ENCODE measurements at regions of chr1 and their contacts with region 1.

Region 1: GRCh38 chr1:39575191-39576015 is 1.2 kb downstream of the PABPC4 start:
- DNase-seq: no peak
- H3K4me3 ChIP-seq: peak overlapping the region; percentile 68 to 99 (median 73)
- H3K27ac ChIP-seq: no peak overlapping the region
- H3K4me1 ChIP-seq: peaks cover 0 to 19% (median 7%) of the 10 kb centered on the region in 4 experiments; a peak in 5 of 7 replicates
- H3K27me3 ChIP-seq: no peaks in the 10 kb centered on the region
- CTCF ChIP-seq: no peak
- EP300 ChIP-seq: no peak
- POLR2A ChIP-seq: 0 out of 3 replicates have a peak, but pooled peaks of 1 of the 2 experiments have one; percentile 27
- RAD21 ChIP-seq: no peak

Region 2: DNA sequence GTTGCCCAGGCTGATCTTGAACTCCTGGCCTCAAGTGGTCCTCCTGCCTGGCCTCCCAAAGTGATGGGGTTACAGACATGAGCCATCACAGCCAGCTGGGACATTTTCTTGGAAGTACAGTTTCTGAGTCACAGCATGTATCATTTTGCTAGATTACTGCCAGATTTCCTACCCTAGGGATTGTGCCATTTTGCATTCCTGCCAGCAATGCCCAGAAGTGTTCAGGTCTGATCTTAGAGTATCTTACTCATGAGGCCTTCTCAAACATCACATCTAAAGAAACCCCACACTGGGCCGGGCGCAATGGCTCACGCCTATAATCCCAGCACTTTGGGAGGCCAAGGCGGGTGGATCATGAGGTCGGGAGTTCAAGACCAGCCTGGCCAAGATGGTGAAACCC is 73.7 kb before region 1 on chr1:
- CTCF ChIA-PET with region 1: no interaction called
- POLR2A ChIA-PET with region 1: no interaction called
- DNase-seq: no peak
- H3K4me3 ChIP-seq: no peak overlapping the region
- H3K27ac ChIP-seq: no peak overlapping the region
- H3K4me1 ChIP-seq: peaks cover 0 to 3% (median 0%) of the 10 kb centered on the region in 4 experiments; a peak in 2 of 7 replicates
- H3K27me3 ChIP-seq: no peaks in the 10 kb centered on the region; a peak in 1 of 7 replicates
- CTCF ChIP-seq: no peak
- EP300 ChIP-seq: no peak
- POLR2A ChIP-seq: no peak
- RAD21 ChIP-seq: no peak

Region 3: GRCh38 chr1:39639305-39640130 is 64.1 kb after region 1 on chr1 and contains the start of gene HEYL:
- CTCF ChIA-PET with region 1: interaction called, 14 read pairs
- POLR2A ChIA-PET with region 1: interaction called, 3 read pairs
- DNase-seq: peak; percentile 44 to 94
- H3K4me3 ChIP-seq: peak within 1 kb of the TSS; percentile 43 to 76 (median 54)
- H3K27ac ChIP-seq: no peak within 1 kb of the TSS
- H3K4me1 ChIP-seq: peaks cover 0 to 5% (median 0%) of the 10 kb centered on the region in 4 experiments; a peak in 1 of 7 replicates
- H3K27me3 ChIP-seq: peaks cover 4 to 48% (median 38%) of the 10 kb centered on the region in 4 experiments
- CTCF ChIP-seq: peak; percentile 70 to 97 (median 74)
- EP300 ChIP-seq: no peak
- POLR2A ChIP-seq: no peak
- RAD21 ChIP-seq: peak; percentile 36 to 63; a peak in 3 of 4 replicates
- total RNA-seq, gene HEYL: 3.1 and 3.5 TPM in 2 replicates

Measured in H1 (cell line).